PC-9 (cell line): ENCODE measurements at regions of chr3 and their contacts with region 1.

Region 1: GRCh38 chr3:171566803-171567422 is 106.7 kb upstream of the TNIK start:
- DNase-seq: peak in 1 of 2 experiments; percentile 45
- H3K4me3 ChIP-seq: no peak overlapping the region
- H3K27ac ChIP-seq: no peak overlapping the region
- H3K4me1 ChIP-seq: peaks cover 30% of the 10 kb centered on the region
- H3K27me3 ChIP-seq: no peaks in the 10 kb centered on the region
- CTCF ChIP-seq: peak; percentile 96

Region 2: GRCh38 chr3:169764452-169765274 is 1802.2 kb before region 1 on chr3 and contains the start of gene TERC:
- CTCF ChIA-PET with region 1: no interaction called
- POLR2A ChIA-PET with region 1: no interaction called
- intact Hi-C with region 1: loop called (anchors 5 kb)
- DNase-seq: peak; percentile 93 to 96
- H3K4me3 ChIP-seq: peak within 1 kb of the TSS; percentile 99
- H3K27ac ChIP-seq: peak within 1 kb of the TSS; percentile 75
- H3K4me1 ChIP-seq: peaks cover 5% of the 10 kb centered on the region; the same call in 1 of the 2 replicates
- H3K27me3 ChIP-seq: no peaks in the 10 kb centered on the region
- CTCF ChIP-seq: no peak
- total RNA-seq, gene TERC: 7.6 and 22.7 TPM in 2 replicates

Region 3: GRCh38 chr3:171049861-171050444 is 517.0 kb before region 1 on chr3:
- CTCF ChIA-PET with region 1: no interaction called
- POLR2A ChIA-PET with region 1: no interaction called
- intact Hi-C with region 1: loop called (anchors 1 kb)
- DNase-seq: peak; percentile 53 to 64
- H3K4me3 ChIP-seq: no peak overlapping the region
- H3K27ac ChIP-seq: no peak overlapping the region
- H3K4me1 ChIP-seq: peaks cover 24% of the 10 kb centered on the region
- H3K27me3 ChIP-seq: no peaks in the 10 kb centered on the region
- CTCF ChIP-seq: peak; percentile 86

Region 4: GRCh38 chr3:171157286-171157685 is 409.6 kb before region 1 on chr3:
- CTCF ChIA-PET with region 1: interaction called, 8 read pairs
- POLR2A ChIA-PET with region 1: no interaction called
- intact Hi-C with region 1: loop called (anchors 1 kb)
- DNase-seq: peak in 1 of 2 experiments; percentile 77
- H3K4me3 ChIP-seq: peak overlapping the region; percentile 17; the same call in 1 of the 2 replicates
- H3K27ac ChIP-seq: peak overlapping the region; percentile 93
- H3K4me1 ChIP-seq: peaks cover 53% of the 10 kb centered on the region
- H3K27me3 ChIP-seq: no peaks in the 10 kb centered on the region
- CTCF ChIP-seq: peak; percentile 43; the same call in 1 of the 2 replicates

Region 5: GRCh38 chr3:171187706-171188290 is 379.1 kb before region 1 on chr3:
- CTCF ChIA-PET with region 1: interaction called, 3 read pairs
- POLR2A ChIA-PET with region 1: no interaction called
- intact Hi-C with region 1: loop called (anchors 1 kb)
- DNase-seq: peak in 1 of 2 experiments; percentile 50
- H3K4me3 ChIP-seq: no peak overlapping the region
- H3K27ac ChIP-seq: no peak overlapping the region
- H3K4me1 ChIP-seq: peaks cover 44% of the 10 kb centered on the region
- H3K27me3 ChIP-seq: no peaks in the 10 kb centered on the region
- CTCF ChIP-seq: peak; percentile 81

Region 6: DNA sequence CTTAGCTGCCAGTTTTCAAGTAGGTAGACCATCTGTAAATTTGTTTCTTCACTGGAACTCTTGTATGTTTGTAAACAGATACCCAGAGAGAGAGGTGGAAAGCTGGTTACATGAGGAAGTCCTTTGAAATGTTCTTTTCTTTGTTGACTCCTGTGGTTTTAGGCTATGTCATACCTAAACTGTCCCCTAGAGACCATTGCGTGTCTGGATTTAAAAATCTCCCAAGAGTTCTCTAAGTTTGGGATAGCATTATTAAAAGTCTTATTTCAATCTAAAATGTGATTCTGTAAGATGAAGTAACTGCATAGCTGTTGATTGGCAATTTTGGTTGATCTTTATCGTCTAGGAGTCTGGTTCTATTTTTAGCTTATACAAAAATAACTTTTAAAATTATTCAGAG is 754.1 kb after region 1 on chr3:
- CTCF ChIA-PET with region 1: no interaction called
- POLR2A ChIA-PET with region 1: no interaction called
- intact Hi-C with region 1: no loop called
- DNase-seq: no peak
- H3K4me3 ChIP-seq: no peak overlapping the region
- H3K27ac ChIP-seq: peak overlapping the region; percentile 4; the same call in 1 of the 2 replicates
- H3K4me1 ChIP-seq: peaks cover 47% of the 10 kb centered on the region
- H3K27me3 ChIP-seq: no peaks in the 10 kb centered on the region
- CTCF ChIP-seq: peak; percentile 29; the same call in 1 of the 2 replicates

Region 7: DNA sequence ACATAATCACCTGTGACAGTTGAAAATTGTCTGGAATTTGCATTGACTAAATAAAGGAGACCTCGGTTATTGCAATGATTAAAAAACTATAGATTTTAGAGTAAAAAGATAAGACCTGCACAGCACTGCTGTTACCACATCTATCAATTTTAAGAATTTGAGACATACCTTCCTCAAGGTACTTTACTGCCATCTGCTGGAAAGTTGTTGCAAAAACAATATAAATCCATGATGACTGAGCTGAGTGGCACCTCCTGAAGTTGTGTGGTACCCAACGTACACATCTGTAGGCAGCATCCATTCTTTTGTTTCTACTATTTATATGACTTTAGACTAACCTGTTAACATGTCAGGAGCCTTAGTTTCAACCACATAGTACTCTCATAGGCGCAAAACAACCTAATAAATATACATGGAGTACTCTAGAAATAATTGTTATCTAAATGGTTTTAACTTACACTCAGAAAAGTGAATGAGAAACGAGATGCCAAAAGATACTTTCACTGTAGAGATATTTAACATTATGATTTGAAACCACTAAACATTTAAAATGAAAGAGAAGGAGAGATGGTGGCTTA is 774.7 kb after region 1 on chr3:
- CTCF ChIA-PET with region 1: no interaction called
- POLR2A ChIA-PET with region 1: no interaction called
- intact Hi-C with region 1: loop called (anchors 2 kb)
- DNase-seq: peak; percentile 24 to 77
- H3K4me3 ChIP-seq: no peak overlapping the region
- H3K27ac ChIP-seq: no peak overlapping the region
- H3K4me1 ChIP-seq: peaks cover 6% of the 10 kb centered on the region; the same call in 1 of the 2 replicates
- H3K27me3 ChIP-seq: no peaks in the 10 kb centered on the region
- CTCF ChIP-seq: peak; percentile 89